Posterior cingulate gyrus (tissue), 11 donors: ENCODE measurements at regions of chr12 and their contacts with region 1.

Region 1: GRCh38 chr12:132153501-132154340 is 9.5 kb downstream of the NOC4L start:
- DNase-seq: peak in 9 of 10 donors; percentile 40 to 93 (median 59)

Region 2: GRCh38 chr12:132218915-132219314 is 65.2 kb after region 1 on chr12:
- intact Hi-C with region 1: loop called (anchors 2 kb)
- DNase-seq: peak in 4 of 10 donors; percentile 5 to 70 (median 56)

Region 3: DNA sequence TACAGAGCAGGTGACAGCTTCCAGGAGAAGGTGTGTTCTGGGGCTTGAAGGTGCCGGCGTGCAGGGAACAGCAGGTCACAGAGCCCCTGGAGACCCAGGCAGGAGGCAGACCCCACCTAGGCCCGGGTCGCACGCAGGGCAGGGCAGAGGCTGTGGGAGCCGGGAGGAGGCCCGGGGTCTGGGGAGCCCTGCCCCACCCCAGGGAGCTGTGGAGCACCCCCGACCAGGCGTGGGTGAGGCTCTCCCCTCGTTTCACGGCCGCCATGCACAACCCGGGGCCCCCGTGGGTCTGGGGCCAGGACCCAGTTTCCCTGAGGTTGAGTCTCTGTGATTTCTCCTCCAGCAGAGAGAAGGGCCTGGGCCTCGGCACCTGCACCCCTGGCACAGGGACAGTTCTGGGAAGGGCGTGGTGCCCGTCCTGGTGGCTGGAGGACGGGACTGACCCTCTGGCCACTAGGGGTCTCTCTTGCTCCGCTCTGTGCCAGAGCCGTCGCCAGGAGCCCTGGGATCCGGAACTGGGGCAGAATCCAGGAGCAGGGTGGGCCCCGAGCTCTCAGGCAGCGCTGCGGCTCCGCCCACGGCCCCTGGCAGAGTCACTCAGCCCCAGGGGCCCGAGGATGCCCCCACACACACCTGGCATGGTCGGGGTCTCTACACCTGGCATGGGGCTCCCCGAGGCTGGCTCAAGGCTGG is 261.1 kb after region 1 on chr12:
- intact Hi-C with region 1: loop called (anchors 10 kb)
- DNase-seq: peak; percentile 53 to 96 (median 76)

Region 4: GRCh38 chr12:132614861-132615578 is 461.3 kb after region 1 on chr12:
- intact Hi-C with region 1: loop called (anchors 5 kb)
- DNase-seq: peak; percentile 67 to 98 (median 86)